Transverse colon (tissue), 4 donors: ENCODE measurements at regions of chr1 and their contacts with region 1.

Region 1: DNA sequence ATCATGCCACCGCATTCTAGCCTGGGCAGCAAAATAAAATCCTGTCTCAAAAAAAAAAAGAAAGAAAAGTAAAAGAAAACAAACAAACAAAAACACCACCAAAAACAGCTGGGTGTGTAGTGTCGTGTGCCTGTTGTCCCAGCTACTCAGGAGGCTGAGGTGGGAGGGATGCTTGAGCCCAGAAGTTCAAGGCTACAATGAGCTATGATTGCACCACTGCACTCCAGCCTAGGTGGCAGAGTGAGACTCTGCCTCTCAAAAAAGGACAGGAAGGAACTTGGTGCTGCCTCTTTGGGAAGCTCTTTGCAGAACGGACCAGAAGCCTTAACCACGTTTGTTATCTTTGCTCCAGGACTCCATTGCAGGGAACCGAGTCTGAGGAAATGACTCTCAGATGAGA is 11.0 kb downstream of the KIF17 start:
- DNase-seq: no peak
- H3K4me3 ChIP-seq: no peak overlapping the region
- H3K27ac ChIP-seq: no peak overlapping the region
- H3K4me1 ChIP-seq: no peaks in the 10 kb centered on the region
- H3K27me3 ChIP-seq: no peaks in the 10 kb centered on the region
- CTCF ChIP-seq: no peak
- EP300 ChIP-seq: no peak
- POLR2A ChIP-seq: no peak

Region 2: GRCh38 chr1:20216574-20216973 is 490.3 kb before region 1 on chr1:
- in situ Hi-C with region 1: no loop called
- intact Hi-C with region 1: no loop called
- DNase-seq: peak; percentile 29
- H3K4me3 ChIP-seq: no peak overlapping the region
- H3K27ac ChIP-seq: no peak overlapping the region
- H3K4me1 ChIP-seq: peaks cover 9 to 17% (median 13%) of the 10 kb centered on the region in 4 donors
- H3K27me3 ChIP-seq: peaks cover 15% of the 10 kb centered on the region
- CTCF ChIP-seq: peak in 4 of 5 experiments; percentile 47 to 65 (median 56)
- EP300 ChIP-seq: no peak
- POLR2A ChIP-seq: no peak

Region 3: DNA sequence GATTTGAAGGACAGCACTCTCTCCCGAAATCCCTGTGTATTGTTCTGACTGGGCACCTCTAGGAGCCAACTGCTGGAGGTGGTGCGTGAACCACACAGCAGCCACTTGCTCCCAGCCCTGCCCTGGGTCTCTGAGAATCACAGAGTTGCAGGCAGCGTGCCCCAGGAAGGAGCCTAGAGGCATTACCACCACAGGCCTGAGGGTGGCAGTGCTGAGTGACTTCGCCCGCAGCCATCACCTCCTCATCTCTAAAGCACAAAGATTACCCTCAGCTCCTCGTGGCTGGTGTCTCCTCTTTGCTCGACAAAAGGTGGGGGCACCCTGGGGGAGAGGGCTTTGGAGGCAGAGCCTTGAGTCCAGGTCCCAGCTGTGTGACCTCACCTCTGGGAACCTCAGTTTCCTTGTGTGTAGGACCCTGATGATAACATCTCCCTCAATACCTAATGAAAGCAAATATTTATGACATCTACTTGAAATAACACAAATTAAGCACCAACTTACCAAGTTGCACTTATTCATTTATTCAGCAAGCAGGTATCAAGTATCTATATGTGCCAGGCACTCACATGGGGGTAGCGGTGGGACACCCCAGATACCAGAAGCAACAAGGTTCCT is 329.9 kb before region 1 on chr1:
- in situ Hi-C with region 1: no loop called
- intact Hi-C with region 1: no loop called
- DNase-seq: peak; percentile 63
- H3K4me3 ChIP-seq: no peak overlapping the region
- H3K27ac ChIP-seq: no peak overlapping the region
- H3K4me1 ChIP-seq: no peaks in the 10 kb centered on the region
- H3K27me3 ChIP-seq: peaks cover 22% of the 10 kb centered on the region
- CTCF ChIP-seq: peak; percentile 71 to 87 (median 81)
- EP300 ChIP-seq: no peak
- POLR2A ChIP-seq: no peak

Region 4: DNA sequence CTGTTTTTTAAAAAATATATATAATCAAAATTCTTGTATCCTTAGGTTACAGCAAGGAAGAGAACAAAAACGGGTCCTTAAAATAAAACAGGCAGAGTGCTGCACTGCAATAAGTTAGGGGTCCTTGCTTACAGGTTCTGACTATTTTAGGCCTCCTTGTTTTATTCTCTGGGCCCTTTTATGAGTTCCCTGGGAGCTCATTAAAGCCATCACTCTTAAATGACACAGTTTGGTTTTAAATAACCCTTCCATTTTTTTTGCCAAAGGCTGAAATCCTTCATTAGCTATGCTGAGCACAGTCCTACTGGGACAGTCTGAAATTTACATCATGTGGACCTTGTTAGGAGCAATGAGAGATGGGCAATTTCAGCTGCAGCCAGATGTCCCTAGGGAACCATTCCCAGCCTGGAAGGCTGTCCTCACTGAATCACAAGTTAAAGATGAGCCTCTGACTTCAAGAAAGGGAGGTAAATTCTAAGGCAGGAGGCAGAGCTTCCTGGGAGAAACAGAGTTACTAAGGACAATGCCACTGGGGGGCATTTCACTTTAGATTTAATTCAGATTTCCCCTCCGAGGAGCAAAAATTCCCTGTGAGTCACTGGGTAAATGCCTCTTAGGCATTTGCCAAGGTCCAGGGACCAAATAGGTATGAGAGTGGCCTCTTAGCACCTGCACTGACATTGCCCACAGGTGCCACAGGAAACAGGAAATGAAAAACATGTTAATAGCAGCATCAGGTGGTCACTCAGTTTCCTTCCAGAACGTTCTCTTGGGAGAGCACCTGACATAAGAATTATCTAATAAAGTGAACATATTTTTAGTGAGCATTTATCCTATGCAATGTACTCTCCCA is 195.1 kb before region 1 on chr1:
- in situ Hi-C with region 1: no loop called
- intact Hi-C with region 1: no loop called
- DNase-seq: no peak
- H3K4me3 ChIP-seq: no peak overlapping the region
- H3K27ac ChIP-seq: no peak overlapping the region
- H3K4me1 ChIP-seq: peaks cover 4 to 10% (median 9%) of the 10 kb centered on the region in 4 donors
- H3K27me3 ChIP-seq: peaks cover 14% of the 10 kb centered on the region
- CTCF ChIP-seq: no peak
- EP300 ChIP-seq: no peak
- POLR2A ChIP-seq: no peak

Region 5: DNA sequence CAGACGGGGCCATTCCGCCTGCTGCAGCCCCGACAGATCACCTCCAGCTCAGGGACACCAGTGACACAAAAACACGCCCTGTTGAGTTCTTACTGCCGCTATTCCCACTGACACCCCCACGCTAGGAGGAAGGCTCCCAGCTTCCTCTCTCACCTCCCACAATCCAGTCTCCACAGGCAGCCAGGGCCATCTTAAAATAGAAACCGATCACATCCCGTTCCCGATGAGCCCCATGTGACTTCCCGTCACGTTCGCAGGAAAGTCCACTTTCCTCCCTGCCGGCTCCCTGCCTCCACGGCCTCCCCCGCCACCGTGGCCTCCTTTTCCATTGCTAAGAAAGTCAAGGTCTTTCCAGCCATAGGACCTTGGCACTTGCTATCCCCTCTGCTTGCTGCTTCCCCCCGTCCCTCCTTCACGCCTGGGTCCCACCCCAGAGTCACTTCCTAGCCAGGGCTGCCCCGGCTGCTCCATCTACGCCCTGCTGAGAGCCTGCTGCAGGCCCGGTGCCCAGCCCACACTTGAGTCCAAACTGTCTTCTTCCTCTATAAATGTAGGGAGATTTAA is 21.7 kb before region 1 on chr1:
- in situ Hi-C with region 1: no loop called
- intact Hi-C with region 1: loop called (anchors 2 kb)
- DNase-seq: no peak
- H3K4me3 ChIP-seq: no peak overlapping the region
- H3K27ac ChIP-seq: peak overlapping the region; percentile 28 to 58 (median 40)
- H3K4me1 ChIP-seq: no peaks in the 10 kb centered on the region
- H3K27me3 ChIP-seq: no peaks in the 10 kb centered on the region
- CTCF ChIP-seq: no peak
- EP300 ChIP-seq: no peak
- POLR2A ChIP-seq: no peak

Region 6: DNA sequence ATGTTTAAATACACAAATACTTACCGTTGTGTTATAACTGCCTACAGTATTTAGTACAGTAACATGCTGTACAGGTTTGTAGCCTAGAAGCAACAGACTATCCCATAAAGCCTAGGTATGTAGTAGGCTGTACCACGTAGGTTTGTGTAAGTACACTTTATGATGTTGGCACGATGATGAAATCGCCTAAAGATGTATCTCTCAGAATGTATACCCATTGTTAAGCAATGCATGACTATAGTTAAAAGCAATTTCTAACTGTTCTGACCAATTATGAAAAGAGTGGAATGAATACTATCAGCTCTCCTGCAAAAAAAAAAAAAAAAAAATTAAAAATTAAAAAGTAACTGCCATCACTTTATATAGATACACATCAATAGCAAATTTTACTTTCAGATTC is 68.9 kb after region 1 on chr1:
- in situ Hi-C with region 1: no loop called
- intact Hi-C with region 1: no loop called
- DNase-seq: no peak
- H3K4me3 ChIP-seq: no peak overlapping the region
- H3K27ac ChIP-seq: no peak overlapping the region
- H3K4me1 ChIP-seq: peaks cover 0 to 14% (median 5%) of the 10 kb centered on the region in 4 donors
- H3K27me3 ChIP-seq: no peaks in the 10 kb centered on the region
- CTCF ChIP-seq: no peak
- EP300 ChIP-seq: no peak
- POLR2A ChIP-seq: no peak